ENCODE measurements at regions of chr1 and their contacts with region 1.

Region 1: DNA sequence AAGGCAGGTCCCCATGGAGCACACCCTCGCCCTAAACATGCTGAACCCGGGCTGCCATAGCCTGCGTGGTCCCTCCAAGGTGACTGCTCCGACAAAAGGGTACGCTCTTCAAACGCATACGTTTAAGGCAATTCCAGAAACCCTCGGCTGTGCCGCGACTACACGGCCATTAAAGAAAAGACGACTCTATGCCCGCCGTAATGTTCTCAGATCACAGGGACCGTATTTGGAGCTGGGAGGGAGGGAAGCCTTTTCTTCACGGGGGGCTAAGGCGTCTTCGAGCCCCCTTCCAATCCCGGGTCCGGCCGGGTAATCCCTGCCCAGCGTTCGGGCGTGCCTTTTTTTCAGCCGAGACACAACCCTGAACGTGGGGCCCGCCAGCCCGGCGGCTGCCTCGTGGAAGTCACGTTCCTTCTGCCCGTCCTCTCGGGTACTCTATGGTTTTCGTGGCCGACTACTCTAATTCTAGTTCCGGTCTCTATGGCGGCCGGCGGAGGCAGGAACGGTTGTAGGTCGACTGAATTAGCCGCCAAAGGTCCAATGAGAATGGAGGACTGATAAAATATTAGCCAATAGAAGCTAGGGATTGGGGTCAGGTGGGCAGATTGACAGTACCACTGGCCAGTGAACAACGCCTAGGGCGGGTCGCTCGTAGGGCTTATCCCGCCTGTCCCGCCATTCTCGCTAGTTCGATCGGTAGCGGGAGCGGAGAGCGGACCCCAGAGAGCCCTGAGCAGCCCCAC is at the start of gene YBX1:
- DNase-seq: peak; percentile 90 to 97 (median 97)
- H3K4me3 ChIP-seq: peak within 1 kb of the TSS; percentile 92
- H3K4me3 Mint-ChIP-seq: peak within 1 kb of the TSS; percentile 96 to 100 (median 99)
- H3K27ac ChIP-seq: peak within 1 kb of the TSS; percentile 86
- H3K27ac Mint-ChIP-seq: peak within 1 kb of the TSS; percentile 96 to 99 (median 98)
- H3K4me1 ChIP-seq: peaks cover 49% of the 10 kb centered on the region
- H3K4me1 Mint-ChIP-seq: peaks cover 53 to 64% (median 64%) of the 10 kb centered on the region in 3 donors
- H3K27me3 ChIP-seq: no peaks in the 10 kb centered on the region
- H3K27me3 Mint-ChIP-seq: peaks cover 0 to 2% of the 10 kb centered on the region in 2 donors
- total RNA-seq, gene YBX1: 1,366 to 1,379 TPM

Region 2: GRCh38 chr1:42657971-42658879 is 23.7 kb before region 1 on chr1 and contains the start of gene PPIH:
- CTCF ChIA-PET with region 1: interaction called, 12 read pairs
- POLR2A ChIA-PET with region 1: interaction called, 43 read pairs
- DNase-seq: peak; percentile 91 to 95 (median 92)
- H3K4me3 ChIP-seq: peak within 1 kb of the TSS; percentile 92
- H3K4me3 Mint-ChIP-seq: peak within 1 kb of the TSS; percentile 93 to 99 (median 98)
- H3K27ac ChIP-seq: peak within 1 kb of the TSS; percentile 81
- H3K27ac Mint-ChIP-seq: peak within 1 kb of the TSS; percentile 88 to 98 (median 95)
- H3K4me1 ChIP-seq: peaks cover 22% of the 10 kb centered on the region
- H3K4me1 Mint-ChIP-seq: peaks cover 35 to 47% (median 46%) of the 10 kb centered on the region in 3 donors
- H3K27me3 ChIP-seq: no peaks in the 10 kb centered on the region
- H3K27me3 Mint-ChIP-seq: no peaks in the 10 kb centered on the region
- total RNA-seq, gene PPIH: 95.9 to 117 TPM